ENCODE measurements at regions of chr17 and their contacts with region 1.

Region 1: GRCh38 chr17:64554028-64554637 is 47.4 kb downstream of the CEP95 start:
- DNase-seq: no peak
- H3K4me3 ChIP-seq: no peak overlapping the region
- H3K27ac ChIP-seq: no peak overlapping the region
- H3K4me1 ChIP-seq: no peaks in the 10 kb centered on the region
- H3K27me3 ChIP-seq: no peaks in the 10 kb centered on the region
- CTCF ChIP-seq: no peak

Region 2: DNA sequence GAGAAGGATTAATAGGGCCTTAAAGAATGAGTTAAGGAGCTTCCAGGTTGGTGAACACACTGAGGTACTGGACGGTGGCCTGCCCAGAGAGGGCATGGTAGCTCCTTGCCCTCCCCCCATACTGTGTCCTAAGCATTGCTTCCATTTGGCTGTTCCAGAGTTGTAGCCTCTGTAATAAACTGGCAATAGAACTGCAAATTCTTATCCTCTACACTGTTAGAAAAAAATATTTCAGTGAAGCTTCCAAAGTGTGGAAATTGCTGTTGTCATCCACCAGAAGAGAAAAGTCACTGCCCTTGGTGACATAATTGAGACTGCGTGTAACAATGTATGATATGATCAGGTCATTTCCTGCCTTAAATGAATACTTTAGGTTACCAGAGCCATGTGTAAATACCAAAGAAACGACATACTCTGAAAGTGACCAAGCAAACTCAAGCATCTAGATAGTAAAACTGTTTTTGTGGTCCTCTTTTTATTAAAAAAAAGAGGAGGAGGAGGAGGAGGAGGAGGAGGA is 18.6 kb after region 1 on chr17:
- CTCF ChIA-PET with region 1: no interaction called
- dilution Hi-C with region 1: no loop called
- in situ Hi-C with region 1: no loop called
- intact Hi-C with region 1: loop called (anchors 2 kb)
- DNase-seq: no peak
- H3K4me3 ChIP-seq: no peak overlapping the region
- H3K27ac ChIP-seq: no peak overlapping the region
- H3K4me1 ChIP-seq: no peaks in the 10 kb centered on the region
- H3K27me3 ChIP-seq: no peaks in the 10 kb centered on the region
- CTCF ChIP-seq: no peak

Region 3: GRCh38 chr17:64622931-64623654 is 69.0 kb after region 1 on chr17:
- CTCF ChIA-PET with region 1: no interaction called
- dilution Hi-C with region 1: no loop called
- in situ Hi-C with region 1: no loop called
- intact Hi-C with region 1: no loop called
- DNase-seq: peak; percentile 80
- H3K4me3 ChIP-seq: no peak overlapping the region
- H3K27ac ChIP-seq: peak overlapping the region; percentile 48
- H3K4me1 ChIP-seq: peaks cover 26% of the 10 kb centered on the region
- H3K27me3 ChIP-seq: no peaks in the 10 kb centered on the region
- CTCF ChIP-seq: no peak

Region 4: DNA sequence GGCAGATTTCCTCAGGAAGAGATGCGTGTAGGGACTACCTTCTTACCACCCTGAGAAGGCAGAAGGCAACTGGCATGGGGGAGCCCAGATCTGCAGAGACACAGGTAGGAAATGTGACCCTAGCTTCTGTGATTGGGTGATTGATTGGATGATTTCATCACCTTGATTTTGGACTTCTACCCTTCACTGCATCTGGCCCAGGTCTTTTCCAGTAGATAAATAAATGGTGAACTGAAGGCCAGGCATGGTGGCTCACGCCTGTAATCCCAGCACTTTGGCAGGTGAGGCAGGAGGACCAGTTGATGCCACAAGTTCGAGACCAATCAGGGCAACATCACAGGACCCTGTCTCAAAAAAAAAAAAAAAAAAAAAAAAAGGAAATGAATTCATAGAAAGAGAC is 122.6 kb after region 1 on chr17:
- CTCF ChIA-PET with region 1: no interaction called
- dilution Hi-C with region 1: no loop called
- in situ Hi-C with region 1: no loop called
- intact Hi-C with region 1: no loop called
- DNase-seq: no peak
- H3K4me3 ChIP-seq: no peak overlapping the region
- H3K27ac ChIP-seq: no peak overlapping the region
- H3K4me1 ChIP-seq: peaks cover 23% of the 10 kb centered on the region
- H3K27me3 ChIP-seq: no peaks in the 10 kb centered on the region
- CTCF ChIP-seq: no peak

Region 5: DNA sequence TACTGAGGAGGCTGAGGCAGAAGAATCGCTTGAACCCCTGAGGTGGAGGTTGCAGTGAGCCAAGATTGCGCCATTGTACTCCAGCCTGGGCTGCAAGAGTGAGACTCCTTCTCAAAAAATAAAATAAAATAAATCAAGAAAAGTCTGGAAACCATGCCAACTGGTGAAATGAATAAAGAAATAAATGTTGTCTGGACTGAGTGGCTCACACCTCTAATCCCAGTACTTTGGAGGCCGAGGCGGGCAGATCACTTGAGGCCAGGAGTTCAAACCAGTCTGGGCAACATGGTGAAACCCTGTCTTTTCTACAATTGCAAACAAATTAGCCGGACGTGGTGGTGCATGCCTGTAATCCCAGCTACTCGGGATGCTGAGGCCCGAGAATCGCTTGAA is 365.9 kb after region 1 on chr17:
- CTCF ChIA-PET with region 1: no interaction called
- dilution Hi-C with region 1: no loop called
- in situ Hi-C with region 1: no loop called
- intact Hi-C with region 1: no loop called
- DNase-seq: no peak
- H3K4me3 ChIP-seq: peak overlapping the region in 2 of 3 experiments; percentile 43 to 72
- H3K27ac ChIP-seq: no peak overlapping the region
- H3K4me1 ChIP-seq: peaks cover 8% of the 10 kb centered on the region
- H3K27me3 ChIP-seq: no peaks in the 10 kb centered on the region
- CTCF ChIP-seq: no peak